Endothelial cell of umbilical vein (primary cell): ENCODE measurements at regions of chr9 and their contacts with region 1.

Region 1: GRCh38 chr9:105881654-105882349 is 187.5 kb downstream of the TMEM38B start:
- DNase-seq: peak; percentile 55
- H3K4me3 ChIP-seq: no peak overlapping the region
- H3K27ac ChIP-seq: no peak overlapping the region
- H3K4me1 ChIP-seq: no peaks in the 10 kb centered on the region
- H3K27me3 ChIP-seq: no peaks in the 10 kb centered on the region
- CTCF ChIP-seq: peak; percentile 78 to 85
- POLR2A ChIP-seq: no peak

Region 2: DNA sequence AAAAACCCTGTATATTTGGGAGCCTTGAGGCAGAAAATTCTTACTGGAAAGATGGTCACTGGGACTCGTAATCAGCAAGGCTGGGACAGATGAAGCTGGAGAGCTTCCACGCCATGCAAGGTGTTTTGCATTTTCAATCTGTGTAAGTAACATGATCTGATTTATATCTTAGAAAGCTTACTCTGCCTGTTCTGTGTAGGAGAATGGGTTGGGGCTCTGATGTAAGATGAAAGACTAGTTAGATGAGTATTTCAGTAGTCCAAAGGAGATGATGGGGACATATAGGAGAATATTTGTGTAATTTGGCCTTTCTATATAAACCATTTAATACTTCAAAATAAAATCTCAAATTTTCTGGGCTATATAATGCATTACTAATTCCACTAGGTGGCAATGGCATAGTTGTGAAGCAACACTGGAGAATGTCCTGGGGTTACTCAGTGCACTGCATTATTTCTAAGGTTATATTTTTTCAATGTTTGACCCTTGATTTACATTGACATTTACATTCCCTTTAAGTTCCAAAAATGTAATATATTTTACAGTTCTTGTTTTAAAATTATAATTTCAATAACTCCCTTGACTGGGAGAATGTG is 455.9 kb before region 1 on chr9:
- CTCF ChIA-PET with region 1: no interaction called
- POLR2A ChIA-PET with region 1: no interaction called
- dilution Hi-C with region 1: no loop called
- intact Hi-C with region 1: loop called (anchors 5 kb)
- DNase-seq: peak; percentile 26
- H3K4me3 ChIP-seq: no peak overlapping the region
- H3K27ac ChIP-seq: no peak overlapping the region
- H3K4me1 ChIP-seq: no peaks in the 10 kb centered on the region
- H3K27me3 ChIP-seq: no peaks in the 10 kb centered on the region
- CTCF ChIP-seq: peak; percentile 17 to 18
- POLR2A ChIP-seq: no peak

Region 3: DNA sequence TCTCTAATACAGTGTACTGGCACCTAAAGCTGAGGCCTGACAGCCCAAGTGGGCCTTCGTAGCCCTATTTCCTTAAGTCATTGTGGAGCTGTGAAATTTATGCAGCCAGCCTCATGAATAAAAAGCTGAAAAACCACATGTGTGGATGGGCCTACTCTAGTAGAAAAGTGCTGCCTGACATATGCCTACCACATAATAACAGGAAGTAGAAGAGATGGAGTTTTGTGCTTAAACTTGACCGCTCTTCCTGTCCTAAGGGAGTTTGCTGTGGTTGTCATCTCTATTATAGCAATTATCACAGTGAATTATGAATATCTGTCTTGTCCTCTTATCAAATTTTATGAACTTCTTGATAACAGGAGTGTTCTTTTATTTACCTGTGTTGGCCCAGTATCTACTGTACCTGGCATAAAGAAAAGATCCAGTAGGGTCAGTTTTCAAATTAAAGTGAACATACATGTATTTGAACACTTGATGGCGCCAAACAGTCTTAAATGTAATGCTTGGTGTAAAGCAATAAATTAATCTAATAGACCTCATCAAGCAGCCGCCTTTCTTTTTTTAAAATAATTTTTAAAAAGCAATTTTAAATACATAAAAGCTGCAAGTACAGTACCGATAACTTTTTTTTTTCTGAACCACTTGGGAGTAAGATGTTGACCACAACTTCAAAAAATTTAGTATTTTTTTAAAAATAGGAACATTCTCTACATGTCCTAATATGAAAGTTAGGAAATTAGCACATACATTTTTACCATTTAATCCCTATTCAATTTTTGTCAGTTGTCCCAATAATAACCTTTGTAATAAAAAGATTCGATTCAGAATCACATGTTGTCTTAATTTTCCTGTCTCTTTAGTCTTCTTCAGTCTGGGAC is 272.8 kb before region 1 on chr9:
- CTCF ChIA-PET with region 1: interaction called, 4 read pairs
- POLR2A ChIA-PET with region 1: no interaction called
- dilution Hi-C with region 1: no loop called
- intact Hi-C with region 1: loop called (anchors 2 kb)
- DNase-seq: peak; percentile 52
- H3K4me3 ChIP-seq: no peak overlapping the region
- H3K27ac ChIP-seq: no peak overlapping the region
- H3K4me1 ChIP-seq: no peaks in the 10 kb centered on the region
- H3K27me3 ChIP-seq: no peaks in the 10 kb centered on the region
- CTCF ChIP-seq: peak; percentile 33 to 38
- POLR2A ChIP-seq: no peak

Region 4: DNA sequence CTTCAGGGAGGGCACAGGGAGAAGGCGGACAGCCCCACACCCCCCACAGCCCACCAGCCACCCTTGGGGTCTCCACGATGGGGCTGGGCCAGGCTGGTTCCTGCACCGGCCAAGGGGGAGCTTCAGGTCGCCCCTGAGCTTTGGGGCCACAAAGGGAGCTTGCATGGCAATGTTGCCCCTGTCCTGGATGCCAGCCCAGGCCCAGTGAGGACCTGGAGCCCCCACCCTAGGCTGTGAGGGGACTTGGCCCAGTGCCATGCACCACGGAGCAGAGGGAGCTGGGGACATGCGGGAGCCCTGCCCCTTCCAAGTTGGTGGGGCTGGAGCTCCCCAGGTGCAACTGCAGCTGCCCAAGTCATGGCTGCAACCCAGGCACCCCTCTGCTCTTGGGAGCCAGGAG is 169.0 kb before region 1 on chr9:
- CTCF ChIA-PET with region 1: no interaction called
- POLR2A ChIA-PET with region 1: no interaction called
- dilution Hi-C with region 1: no loop called
- intact Hi-C with region 1: no loop called
- DNase-seq: no peak
- H3K4me3 ChIP-seq: no peak overlapping the region
- H3K27ac ChIP-seq: no peak overlapping the region
- H3K4me1 ChIP-seq: no peaks in the 10 kb centered on the region
- H3K27me3 ChIP-seq: no peaks in the 10 kb centered on the region
- CTCF ChIP-seq: no peak
- POLR2A ChIP-seq: no peak

Region 5: DNA sequence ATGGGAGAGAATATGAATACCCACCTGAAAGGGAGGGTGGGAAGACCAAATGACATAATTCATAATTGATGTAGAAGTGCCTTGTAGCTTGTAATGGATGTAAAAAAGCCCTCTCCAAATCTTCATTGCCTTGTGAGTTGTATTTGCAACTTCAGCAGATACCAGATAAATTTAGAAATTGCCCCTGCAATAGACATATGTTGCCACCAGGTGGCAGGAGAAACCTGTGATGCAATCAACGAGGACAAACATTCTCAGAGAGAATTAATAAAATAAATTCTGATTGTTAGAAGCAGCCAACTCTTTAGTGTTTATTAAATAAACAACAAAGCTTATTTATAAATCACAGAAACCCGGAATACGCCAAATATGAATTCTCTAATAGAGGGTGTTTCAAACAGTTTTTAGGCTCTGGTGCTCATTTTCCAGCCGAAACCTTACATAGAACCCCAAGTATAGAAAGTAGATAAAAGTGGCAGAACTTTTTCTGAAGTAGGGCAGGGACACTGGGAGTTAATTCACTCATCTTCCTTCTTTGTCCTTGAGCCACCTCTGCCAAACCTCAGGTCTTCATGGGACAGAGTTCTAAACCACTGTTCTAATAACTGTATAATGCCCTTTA is 39.7 kb before region 1 on chr9:
- CTCF ChIA-PET with region 1: interaction called, 17 read pairs
- POLR2A ChIA-PET with region 1: no interaction called
- dilution Hi-C with region 1: no loop called
- intact Hi-C with region 1: loop called (anchors 1 kb)
- DNase-seq: peak; percentile 41
- H3K4me3 ChIP-seq: no peak overlapping the region
- H3K27ac ChIP-seq: no peak overlapping the region
- H3K4me1 ChIP-seq: no peaks in the 10 kb centered on the region
- H3K27me3 ChIP-seq: no peaks in the 10 kb centered on the region
- CTCF ChIP-seq: peak; percentile 57 to 58
- POLR2A ChIP-seq: no peak

Region 6: DNA sequence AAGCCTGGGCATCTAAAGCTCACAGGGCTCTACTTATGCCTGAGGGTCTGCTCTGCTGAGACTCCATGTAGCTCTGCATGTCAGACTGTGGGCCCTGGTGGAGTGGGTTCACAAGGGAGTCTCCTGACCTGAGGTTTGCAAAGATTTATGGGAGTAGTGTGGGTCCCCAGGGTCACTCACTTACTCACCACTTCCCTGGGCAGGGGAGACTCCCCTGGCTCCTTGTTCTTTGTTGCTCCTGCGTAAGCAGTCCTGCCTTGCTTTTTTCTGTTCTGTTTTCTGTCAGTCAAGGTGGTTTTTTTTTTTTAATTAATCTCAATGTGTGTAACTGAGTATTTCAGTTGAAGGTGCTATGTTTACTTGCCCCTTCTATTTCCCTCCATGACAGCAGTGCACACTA is 69.1 kb after region 1 on chr9:
- CTCF ChIA-PET with region 1: no interaction called
- POLR2A ChIA-PET with region 1: no interaction called
- dilution Hi-C with region 1: no loop called
- intact Hi-C with region 1: no loop called
- DNase-seq: no peak
- H3K4me3 ChIP-seq: no peak overlapping the region
- H3K27ac ChIP-seq: no peak overlapping the region
- H3K4me1 ChIP-seq: no peaks in the 10 kb centered on the region
- H3K27me3 ChIP-seq: no peaks in the 10 kb centered on the region
- CTCF ChIP-seq: no peak
- POLR2A ChIP-seq: no peak